ENCODE measurements at regions of chr2 and their contacts with region 1.

Region 1: GRCh38 chr2:153519257-153519875 is 40.8 kb upstream of the RPRM start:
- DNase-seq: no peak
- H3K4me3 ChIP-seq: no peak overlapping the region
- H3K27ac ChIP-seq: no peak overlapping the region
- H3K4me1 ChIP-seq: no peaks in the 10 kb centered on the region
- H3K27me3 ChIP-seq: no peaks in the 10 kb centered on the region
- CTCF ChIP-seq: peak; percentile 35 to 79 (median 66)
- EP300 ChIP-seq: no peak
- POLR2A ChIP-seq: no peak

Region 2: DNA sequence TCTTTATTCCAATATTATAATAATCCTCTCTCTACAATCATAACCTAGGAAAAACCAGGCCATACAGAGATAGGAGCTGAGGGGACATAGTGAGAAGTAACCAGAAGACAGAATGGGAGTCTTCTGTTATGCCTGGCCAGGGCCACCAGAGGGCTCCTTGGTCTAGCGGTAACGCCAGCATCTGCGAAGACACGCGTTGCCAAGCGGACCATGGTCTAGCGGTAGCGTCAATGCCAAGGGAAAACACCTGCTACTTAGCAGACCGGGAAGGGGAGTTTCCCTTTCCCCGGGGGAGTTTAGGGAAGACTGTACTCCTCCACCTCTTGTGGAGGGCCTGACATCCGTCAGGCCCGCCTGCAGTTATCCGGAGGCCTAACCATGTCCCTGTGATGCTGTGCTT is 764.3 kb before region 1 on chr2:
- intact Hi-C with region 1: loop called (anchors 5 kb)
- DNase-seq: no peak
- H3K4me3 ChIP-seq: no peak overlapping the region
- H3K27ac ChIP-seq: no peak overlapping the region
- H3K4me1 ChIP-seq: no peaks in the 10 kb centered on the region
- H3K27me3 ChIP-seq: no peaks in the 10 kb centered on the region
- CTCF ChIP-seq: peak in 2 of 4 experiments; percentile 24 to 38
- EP300 ChIP-seq: no peak
- POLR2A ChIP-seq: no peak

Region 3: DNA sequence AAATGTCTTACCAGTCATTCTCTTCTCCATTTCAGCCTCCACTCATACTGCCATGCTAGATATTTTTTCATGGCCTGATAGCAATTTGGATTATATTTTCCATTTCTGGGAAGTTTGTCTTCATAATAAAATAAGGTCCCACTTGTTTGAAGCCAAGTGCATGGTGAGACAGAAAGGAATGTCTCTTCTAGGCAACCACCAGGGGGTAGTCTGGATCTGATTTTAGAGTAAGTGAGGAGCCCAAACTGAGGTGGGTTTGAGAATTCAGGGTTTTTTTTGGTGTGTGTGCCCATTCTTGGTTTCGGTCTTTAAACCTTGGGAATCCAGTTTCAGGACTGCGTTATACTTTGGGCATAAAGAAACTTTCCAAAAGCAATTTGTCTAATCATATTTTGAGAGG is 356.3 kb before region 1 on chr2:
- intact Hi-C with region 1: loop called (anchors 5 kb)
- DNase-seq: no peak
- H3K4me3 ChIP-seq: no peak overlapping the region
- H3K27ac ChIP-seq: no peak overlapping the region
- H3K4me1 ChIP-seq: peaks cover 0 to under 1% (median 0%) of the 10 kb centered on the region in 4 donors
- H3K27me3 ChIP-seq: no peaks in the 10 kb centered on the region
- CTCF ChIP-seq: peak; percentile 37 to 54 (median 48)
- EP300 ChIP-seq: no peak
- POLR2A ChIP-seq: no peak

Region 4: GRCh38 chr2:153557211-153557610 is 37.8 kb after region 1 on chr2:
- intact Hi-C with region 1: no loop called
- DNase-seq: no peak
- H3K4me3 ChIP-seq: no peak overlapping the region
- H3K27ac ChIP-seq: no peak overlapping the region
- H3K4me1 ChIP-seq: no peaks in the 10 kb centered on the region
- H3K27me3 ChIP-seq: no peaks in the 10 kb centered on the region
- CTCF ChIP-seq: no peak
- EP300 ChIP-seq: no peak
- POLR2A ChIP-seq: no peak

Measured in sigmoid colon (tissue), 7 donors.